ENCODE measurements at regions of chr3 and their contacts with region 1.

Region 1: DNA sequence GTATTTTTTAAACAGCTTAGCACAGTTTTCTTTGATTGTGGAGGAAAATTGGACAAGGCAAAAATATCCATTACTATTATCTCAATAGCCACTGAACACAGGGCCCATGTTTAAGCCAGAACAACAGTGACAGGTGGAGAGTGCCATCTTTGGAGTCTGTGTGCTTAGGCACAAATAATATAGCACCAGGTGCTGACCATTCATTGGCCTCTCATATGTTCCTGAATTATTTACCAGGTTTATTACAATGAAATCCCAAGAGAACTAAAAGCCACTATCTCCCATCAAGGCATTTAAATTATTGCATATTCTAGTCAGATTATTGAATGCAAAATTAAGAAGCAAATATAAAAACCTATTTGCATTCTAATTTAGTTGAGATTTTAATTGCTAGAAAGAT is 39.6 kb downstream of the GPR156 start:
- DNase-seq: no peak
- ATAC-seq: no peak
- H3K4me3 ChIP-seq: no peak overlapping the region
- H3K4me3 Mint-ChIP-seq: no peak overlapping the region
- H3K27ac ChIP-seq: no peak overlapping the region
- H3K27ac Mint-ChIP-seq: no peak overlapping the region
- H3K4me1 ChIP-seq: no peaks in the 10 kb centered on the region
- H3K4me1 Mint-ChIP-seq: no peaks in the 10 kb centered on the region
- H3K27me3 ChIP-seq: no peaks in the 10 kb centered on the region
- H3K27me3 Mint-ChIP-seq: peaks cover 9 to 23% of the 10 kb centered on the region in 2 donors
- CTCF ChIP-seq: no peak

Region 2: DNA sequence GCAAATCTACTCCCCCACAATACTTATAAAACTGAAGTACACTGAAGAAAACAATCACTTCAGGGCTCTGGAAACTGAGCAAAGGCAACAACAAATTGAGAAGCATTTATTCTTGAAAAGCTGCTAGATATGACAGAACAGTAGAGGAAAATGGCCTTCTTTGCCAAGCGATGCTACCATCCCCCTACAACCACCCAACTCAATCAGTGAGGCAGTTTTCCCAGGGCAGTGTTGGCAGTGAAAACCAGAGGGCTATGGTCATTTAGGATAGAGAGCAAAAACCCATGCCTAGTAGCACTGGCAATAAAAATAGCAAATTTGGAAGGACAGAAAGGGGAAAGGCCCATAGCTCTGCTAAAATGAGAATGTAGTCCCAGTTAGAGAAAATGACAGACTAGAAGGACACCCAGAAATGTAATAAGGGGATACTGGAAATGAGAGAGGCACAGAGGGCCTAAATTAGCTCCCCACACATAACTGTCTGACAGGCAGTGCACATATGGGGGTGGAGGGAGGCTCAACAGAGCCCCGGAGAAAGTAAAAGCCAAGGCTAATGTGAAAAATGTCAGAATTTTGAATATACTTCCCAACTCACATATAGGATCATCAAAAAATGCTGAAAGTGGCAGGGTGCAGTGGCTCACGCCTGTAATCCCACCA is 294.6 kb before region 1 on chr3:
- intact Hi-C with region 1: no loop called
- DNase-seq: no peak
- ATAC-seq: no peak
- H3K4me3 ChIP-seq: no peak overlapping the region
- H3K4me3 Mint-ChIP-seq: no peak overlapping the region
- H3K27ac ChIP-seq: no peak overlapping the region
- H3K27ac Mint-ChIP-seq: peak overlapping the region in 1 of 2 donors; percentile 47
- H3K4me1 ChIP-seq: no peaks in the 10 kb centered on the region
- H3K4me1 Mint-ChIP-seq: peaks cover 45 to 60% of the 10 kb centered on the region in 2 donors
- H3K27me3 ChIP-seq: no peaks in the 10 kb centered on the region
- H3K27me3 Mint-ChIP-seq: no peaks in the 10 kb centered on the region
- CTCF ChIP-seq: no peak

Region 3: GRCh38 chr3:120203016-120203415 is 42.4 kb before region 1 on chr3:
- intact Hi-C with region 1: no loop called
- DNase-seq: no peak
- ATAC-seq: no peak
- H3K4me3 ChIP-seq: no peak overlapping the region
- H3K4me3 Mint-ChIP-seq: no peak overlapping the region
- H3K27ac ChIP-seq: no peak overlapping the region
- H3K27ac Mint-ChIP-seq: no peak overlapping the region
- H3K4me1 ChIP-seq: no peaks in the 10 kb centered on the region
- H3K4me1 Mint-ChIP-seq: no peaks in the 10 kb centered on the region
- H3K27me3 ChIP-seq: no peaks in the 10 kb centered on the region
- H3K27me3 Mint-ChIP-seq: peaks cover 0 to 2% of the 10 kb centered on the region in 2 donors
- CTCF ChIP-seq: no peak

Region 4: GRCh38 chr3:120324192-120324591 is 78.8 kb after region 1 on chr3:
- intact Hi-C with region 1: no loop called
- DNase-seq: no peak
- ATAC-seq: no peak
- H3K4me3 ChIP-seq: no peak overlapping the region
- H3K4me3 Mint-ChIP-seq: no peak overlapping the region
- H3K27ac ChIP-seq: no peak overlapping the region
- H3K27ac Mint-ChIP-seq: peak overlapping the region in 1 of 2 donors; percentile 29
- H3K4me1 ChIP-seq: no peaks in the 10 kb centered on the region
- H3K4me1 Mint-ChIP-seq: no peaks in the 10 kb centered on the region
- H3K27me3 ChIP-seq: no peaks in the 10 kb centered on the region
- H3K27me3 Mint-ChIP-seq: no peaks in the 10 kb centered on the region
- CTCF ChIP-seq: no peak

Region 5: DNA sequence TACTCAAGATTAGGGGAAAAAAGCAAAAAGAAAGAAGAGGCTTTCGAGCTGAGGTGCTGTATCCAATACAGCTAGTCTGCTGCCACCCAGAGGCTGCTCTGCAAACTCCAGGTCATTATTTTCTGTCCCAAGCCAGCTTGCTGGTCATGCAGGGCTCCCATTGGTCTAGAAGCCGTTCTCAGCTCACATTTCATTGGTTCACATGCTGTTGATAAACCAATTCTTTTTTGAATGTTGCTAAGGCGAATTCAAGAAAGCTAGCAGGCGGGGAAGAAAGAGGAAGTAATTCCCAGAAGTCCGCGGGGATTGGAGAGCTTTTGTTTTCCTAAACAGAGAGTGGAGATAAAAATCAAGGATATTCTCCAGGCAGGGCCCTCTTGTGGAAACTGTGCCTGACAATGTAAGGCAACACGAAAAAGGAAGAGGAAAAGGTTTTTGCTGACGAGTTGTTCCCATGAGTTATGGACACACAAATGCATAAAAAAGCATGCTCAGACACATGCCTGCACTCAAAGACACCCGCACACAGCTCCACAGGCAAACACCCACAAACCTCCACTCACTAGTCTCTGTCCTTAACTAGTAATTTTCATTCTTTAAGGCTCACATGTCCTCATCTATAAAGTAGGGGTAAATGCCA is 172.0 kb after region 1 on chr3:
- intact Hi-C with region 1: loop called (anchors 1 kb)
- DNase-seq: peak; percentile 70 to 90
- ATAC-seq: peak; percentile 97 to 100 (median 100)
- H3K4me3 ChIP-seq: peak overlapping the region; percentile 33
- H3K4me3 Mint-ChIP-seq: peak overlapping the region; percentile 90
- H3K27ac ChIP-seq: no peak overlapping the region
- H3K27ac Mint-ChIP-seq: peak overlapping the region in 1 of 2 donors; percentile 75
- H3K4me1 ChIP-seq: peaks cover 8% of the 10 kb centered on the region
- H3K4me1 Mint-ChIP-seq: peaks cover 11 to 12% of the 10 kb centered on the region in 2 donors
- H3K27me3 ChIP-seq: no peaks in the 10 kb centered on the region
- H3K27me3 Mint-ChIP-seq: peaks cover 6 to 9% of the 10 kb centered on the region in 2 donors
- CTCF ChIP-seq: peak; percentile 77

Measured in natural killer cell (primary cell).